ENCODE measurements at regions of chr19 and their contacts with region 1.

Region 1: GRCh38 chr19:6021878-6022569 is 44.1 kb upstream of the RANBP3 start:
- DNase-seq: peak; percentile 85
- ATAC-seq: peak; percentile 89 to 93

Region 2: DNA sequence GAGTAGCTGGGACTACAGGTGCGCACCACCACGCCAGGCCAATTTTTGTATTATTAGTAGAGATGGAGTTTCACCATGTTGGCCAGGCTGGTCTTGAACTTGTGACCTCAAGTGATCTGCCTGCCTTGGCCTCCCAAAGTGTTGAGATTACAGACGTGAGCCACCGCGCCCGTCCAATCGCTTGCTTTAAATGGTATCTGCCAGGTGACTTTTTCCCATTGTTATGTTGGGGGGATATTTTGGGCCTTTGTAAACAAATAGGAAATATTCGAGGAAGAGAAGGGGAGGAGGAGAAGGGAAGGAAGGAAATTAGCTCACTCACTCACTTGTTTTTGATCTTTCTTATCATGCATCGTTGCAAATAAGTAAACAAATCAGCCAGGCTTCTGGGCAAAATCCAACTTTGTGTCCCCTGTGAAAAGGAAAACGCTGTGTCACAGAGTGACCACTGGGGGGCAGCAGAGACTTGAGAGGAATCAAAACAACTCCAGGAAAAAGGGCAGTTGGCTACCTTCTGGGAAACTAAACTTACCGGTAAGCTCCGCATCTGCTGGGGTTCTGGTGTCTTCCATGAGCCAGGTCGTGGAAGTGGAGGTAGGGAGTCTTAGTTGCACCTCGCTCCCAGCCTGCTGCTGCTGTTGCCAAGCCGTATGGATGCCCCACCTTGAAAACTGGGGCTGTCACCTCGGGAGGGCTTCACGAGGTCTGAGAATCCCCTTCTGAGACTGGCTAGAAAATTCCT is 34.8 kb before region 1 on chr19:
- intact Hi-C with region 1: loop called in 1 of 2 experiments (anchors 5 kb)
- DNase-seq: peak; percentile 76
- ATAC-seq: peak; percentile 21 to 44

Measured in left cardiac atrium (tissue), 4 donors.